T-cell (primary cell): ENCODE measurements at regions of chr5 and their contacts with region 1.

Region 1: GRCh38 chr5:39256477-39257235 is 37.3 kb upstream of the FYB1 start:
- DNase-seq: peak in 1 of 35 experiments; percentile 67
- ATAC-seq: peak in 2 of 4 experiments; percentile 43 to 63
- H3K4me3 ChIP-seq: no peak overlapping the region
- H3K4me3 Mint-ChIP-seq: peak overlapping the region in 1 of 3 donors; percentile 47
- H3K27ac ChIP-seq: no peak overlapping the region
- H3K27ac Mint-ChIP-seq: no peak overlapping the region
- H3K4me1 ChIP-seq: peaks cover 0 to 5% of the 10 kb centered on the region in 2 experiments
- H3K4me1 Mint-ChIP-seq: peaks cover 6 to 22% (median 18%) of the 10 kb centered on the region in 3 donors
- H3K27me3 ChIP-seq: no peaks in the 10 kb centered on the region
- H3K27me3 Mint-ChIP-seq: no peaks in the 10 kb centered on the region

Region 2: GRCh38 chr5:39231705-39232525 is 24.7 kb before region 1 on chr5:
- CTCF ChIA-PET with region 1: no interaction called
- POLR2A ChIA-PET with region 1: interaction called, 3 to 11 read pairs
- DNase-seq: no peak
- ATAC-seq: peak; percentile 24 to 90 (median 49)
- H3K4me3 ChIP-seq: no peak overlapping the region
- H3K4me3 Mint-ChIP-seq: no peak overlapping the region
- H3K27ac ChIP-seq: no peak overlapping the region
- H3K27ac Mint-ChIP-seq: peak overlapping the region; percentile 40 to 83
- H3K4me1 ChIP-seq: no peaks in the 10 kb centered on the region
- H3K4me1 Mint-ChIP-seq: peaks cover 14 to 20% (median 18%) of the 10 kb centered on the region in 3 donors
- H3K27me3 ChIP-seq: no peaks in the 10 kb centered on the region
- H3K27me3 Mint-ChIP-seq: no peaks in the 10 kb centered on the region

Region 3: GRCh38 chr5:39319395-39319794 is 62.7 kb after region 1 on chr5:
- CTCF ChIA-PET with region 1: no interaction called
- POLR2A ChIA-PET with region 1: no interaction called
- DNase-seq: no peak
- ATAC-seq: no peak
- H3K4me3 ChIP-seq: no peak overlapping the region
- H3K4me3 Mint-ChIP-seq: no peak overlapping the region
- H3K27ac ChIP-seq: no peak overlapping the region
- H3K27ac Mint-ChIP-seq: no peak overlapping the region
- H3K4me1 ChIP-seq: no peaks in the 10 kb centered on the region
- H3K4me1 Mint-ChIP-seq: no peaks in the 10 kb centered on the region
- H3K27me3 ChIP-seq: peaks cover 0 to 8% of the 10 kb centered on the region in 2 experiments
- H3K27me3 Mint-ChIP-seq: peaks cover 4 to 10% of the 10 kb centered on the region in 2 donors